Posterior cingulate gyrus (tissue), 11 donors: ENCODE measurements at regions of chrX and their contacts with region 1.

Region 1: GRCh38 chrX:13506574-13506973 is 62.8 kb upstream of the EGFL6 start:
- DNase-seq: peak in 5 of 10 donors; percentile 14 to 45 (median 26)

Region 2: GRCh38 chrX:13305108-13305507 is 201.5 kb before region 1 on chrX:
- intact Hi-C with region 1: no loop called
- DNase-seq: no peak

Region 3: GRCh38 chrX:13418126-13419097 is 88.2 kb before region 1 on chrX:
- intact Hi-C with region 1: no loop called
- DNase-seq: no peak

Region 4: DNA sequence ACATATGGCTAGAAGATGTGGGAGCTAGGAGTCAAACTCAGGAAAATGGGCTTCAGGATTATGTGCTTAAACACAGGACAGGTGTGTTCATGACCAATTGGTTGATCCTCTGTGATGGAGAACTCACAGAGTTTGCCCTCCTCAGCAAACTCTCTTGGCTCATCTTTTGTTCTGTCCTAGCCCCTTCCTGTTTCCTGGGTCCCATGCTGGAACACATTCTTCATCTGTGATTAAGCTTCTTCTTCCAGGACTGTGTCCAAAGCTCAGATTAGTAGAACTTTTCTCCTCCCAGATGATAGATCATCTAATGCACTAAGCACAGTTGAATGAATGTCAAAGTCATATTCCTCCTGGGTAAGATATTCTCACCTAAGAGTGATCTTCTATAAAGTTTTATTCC is 107.6 kb after region 1 on chrX:
- intact Hi-C with region 1: no loop called
- DNase-seq: no peak

Region 5: DNA sequence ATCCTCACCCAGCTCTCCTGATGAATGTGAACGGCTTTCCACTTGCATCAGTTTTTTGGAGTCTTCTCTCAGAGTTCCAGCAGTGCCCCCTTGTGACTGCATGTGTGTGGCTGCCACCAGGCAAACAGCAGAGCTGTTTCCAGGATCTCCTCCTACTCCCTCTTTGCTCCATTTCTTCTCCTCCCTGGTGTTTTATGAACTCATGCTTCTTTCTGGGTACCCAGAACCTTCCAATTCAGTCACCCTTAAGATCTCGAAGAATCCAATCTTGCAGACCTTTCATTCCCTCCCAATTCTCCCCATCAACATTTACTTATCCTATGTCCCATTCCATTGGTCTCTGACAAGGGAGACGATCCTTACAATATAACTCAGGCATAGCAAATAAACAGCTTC is 139.6 kb after region 1 on chrX:
- intact Hi-C with region 1: loop called (anchors 5 kb)
- DNase-seq: peak in 8 of 10 donors; percentile 18 to 94 (median 50)

Region 6: DNA sequence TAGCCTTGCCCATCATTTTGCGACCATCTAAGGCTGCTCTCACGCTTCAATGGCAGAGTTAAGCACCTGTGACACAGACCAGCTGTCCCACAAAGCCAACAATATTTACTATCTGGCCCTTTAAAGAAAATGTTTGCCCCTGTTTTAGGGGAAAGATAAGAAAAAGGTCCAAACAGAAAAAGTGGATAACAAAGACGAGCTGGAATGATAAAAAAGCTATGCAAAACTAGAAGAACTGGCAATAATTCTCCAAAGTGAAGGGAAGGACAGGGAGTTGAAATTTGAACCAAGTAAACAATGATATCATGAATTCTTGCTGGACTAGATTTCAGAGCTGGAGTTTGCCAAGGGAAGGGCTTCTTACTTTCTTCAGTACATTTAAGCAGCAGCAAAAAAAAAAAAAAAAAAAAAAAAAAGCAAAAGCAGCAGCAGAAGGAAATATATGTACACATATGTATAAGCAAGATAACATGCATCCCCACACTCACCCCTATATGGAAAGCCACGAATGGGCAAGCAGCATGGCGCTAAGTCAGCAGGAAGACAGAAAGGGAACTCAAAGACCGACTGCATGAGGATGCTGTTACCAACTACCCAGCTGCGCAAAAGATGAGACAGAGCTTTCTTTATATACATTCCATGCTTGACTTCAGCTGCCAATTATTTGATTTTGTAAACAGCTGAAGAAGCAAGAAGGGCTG is 215.4 kb after region 1 on chrX:
- intact Hi-C with region 1: no loop called
- DNase-seq: no peak

Region 7: DNA sequence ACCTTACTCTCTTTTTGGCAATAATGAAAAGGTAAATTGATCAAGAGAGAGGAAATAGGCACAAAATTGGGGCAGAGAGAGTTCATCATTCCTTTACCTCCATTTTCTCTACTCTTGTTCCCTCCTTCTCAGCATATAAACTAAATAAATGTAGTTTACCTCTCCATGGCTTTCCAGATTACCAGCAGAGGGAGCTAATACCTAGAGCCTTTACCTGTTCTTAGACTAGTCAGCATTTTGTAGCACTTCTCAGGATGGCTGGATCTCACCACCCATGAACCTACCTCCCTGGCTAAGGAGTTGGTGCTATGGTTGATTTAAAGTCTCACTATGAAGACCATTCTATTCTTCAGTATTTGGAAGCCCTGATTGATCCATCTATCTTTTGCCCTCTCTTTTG is 243.6 kb after region 1 on chrX:
- intact Hi-C with region 1: loop called (anchors 10 kb)
- DNase-seq: no peak